HEK293T (cell line): ENCODE measurements at regions of chr14 and their contacts with region 1.

Region 1: DNA sequence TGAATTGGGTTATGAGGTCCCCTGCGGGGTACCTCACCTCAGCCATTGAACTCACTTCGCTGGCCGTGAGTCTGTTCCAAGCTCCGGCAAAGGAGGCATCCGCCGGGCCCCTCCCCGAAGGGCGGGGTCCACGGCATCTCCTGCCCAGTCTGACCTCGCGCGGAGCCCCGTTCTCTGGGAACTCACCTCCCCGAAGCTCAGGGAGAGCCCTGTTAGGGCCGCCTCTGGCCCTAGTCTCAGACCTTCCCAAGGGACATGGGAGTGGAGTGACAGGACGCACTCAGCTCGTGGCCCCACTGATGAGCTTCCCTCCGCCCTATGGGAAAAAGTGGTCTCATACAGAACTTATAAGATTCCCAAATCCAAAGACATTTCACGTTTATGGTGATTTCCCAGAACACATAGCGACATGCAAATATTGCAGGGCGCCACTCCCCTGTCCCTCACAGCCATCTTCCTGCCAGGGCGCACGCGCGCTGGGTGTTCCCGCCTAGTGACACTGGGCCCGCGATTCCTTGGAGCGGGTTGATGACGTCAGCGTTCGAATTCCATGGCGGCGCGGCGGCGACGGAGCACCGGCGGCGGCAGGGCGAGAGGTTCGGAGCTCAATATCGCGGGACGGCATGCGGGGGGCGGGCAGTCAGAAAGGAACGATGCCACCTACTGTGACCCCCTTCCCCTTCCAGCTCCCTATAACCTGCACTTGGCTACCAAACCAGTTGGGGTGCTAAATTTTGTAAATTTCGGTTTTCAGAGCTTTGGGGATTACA is at the start of gene PARP2:
- DNase-seq: peak; percentile 97

Region 2: DNA sequence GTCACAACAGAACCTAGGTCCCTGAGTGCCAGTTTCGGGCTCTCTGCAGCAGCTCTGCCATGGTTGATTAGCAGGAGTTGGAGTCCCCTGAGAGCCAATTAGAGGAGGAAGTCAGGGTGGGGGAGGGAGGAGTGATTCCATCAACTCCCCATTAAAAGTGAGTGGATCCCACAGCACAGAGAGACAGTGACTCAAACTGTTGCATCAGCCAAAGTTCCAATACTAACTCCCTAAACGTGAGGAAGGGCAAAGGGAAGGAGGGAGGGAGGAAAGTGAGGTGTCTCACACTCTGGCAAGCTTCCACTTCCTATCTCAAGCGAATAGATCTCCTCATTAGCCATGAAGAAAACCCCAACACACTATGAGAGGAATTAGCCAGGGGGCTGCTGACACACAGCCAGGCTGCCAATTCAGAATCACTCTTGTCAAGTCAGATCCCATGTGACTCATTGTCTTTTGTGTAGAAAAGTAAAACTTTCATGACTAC is 80.6 kb before region 1 on chr14:
- CTCF ChIA-PET with region 1: no interaction called
- POLR2A ChIA-PET with region 1: no interaction called
- DNase-seq: no peak

Region 3: GRCh38 chr14:20332788-20333493 is 10.3 kb before region 1 on chr14 and contains the start of gene CCNB1IP1:
- CTCF ChIA-PET with region 1: interaction called, 8 read pairs
- POLR2A ChIA-PET with region 1: interaction called, 162 read pairs
- DNase-seq: peak; percentile 79

Region 4: DNA sequence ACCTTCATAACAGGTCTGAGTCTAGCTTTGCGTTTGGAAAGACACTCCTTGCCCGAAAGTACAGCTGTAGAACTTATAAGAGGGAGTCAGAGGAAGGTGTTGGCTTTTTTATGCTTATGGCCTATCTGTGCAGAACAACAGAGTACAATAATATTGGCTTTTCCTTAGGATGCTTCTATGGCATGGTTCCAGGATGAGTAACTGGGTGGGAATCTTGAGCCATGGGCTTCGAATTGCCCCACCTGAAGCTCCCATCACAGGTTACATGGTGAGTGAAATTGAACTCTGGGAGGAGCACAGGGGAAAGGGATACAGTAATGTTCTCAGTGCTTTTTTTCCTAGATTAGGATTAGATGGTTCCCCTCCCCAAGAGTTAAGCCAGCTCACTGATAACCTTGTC is 13.1 kb after region 1 on chr14:
- CTCF ChIA-PET with region 1: no interaction called
- POLR2A ChIA-PET with region 1: interaction called, 21 read pairs
- DNase-seq: no peak

Region 5: DNA sequence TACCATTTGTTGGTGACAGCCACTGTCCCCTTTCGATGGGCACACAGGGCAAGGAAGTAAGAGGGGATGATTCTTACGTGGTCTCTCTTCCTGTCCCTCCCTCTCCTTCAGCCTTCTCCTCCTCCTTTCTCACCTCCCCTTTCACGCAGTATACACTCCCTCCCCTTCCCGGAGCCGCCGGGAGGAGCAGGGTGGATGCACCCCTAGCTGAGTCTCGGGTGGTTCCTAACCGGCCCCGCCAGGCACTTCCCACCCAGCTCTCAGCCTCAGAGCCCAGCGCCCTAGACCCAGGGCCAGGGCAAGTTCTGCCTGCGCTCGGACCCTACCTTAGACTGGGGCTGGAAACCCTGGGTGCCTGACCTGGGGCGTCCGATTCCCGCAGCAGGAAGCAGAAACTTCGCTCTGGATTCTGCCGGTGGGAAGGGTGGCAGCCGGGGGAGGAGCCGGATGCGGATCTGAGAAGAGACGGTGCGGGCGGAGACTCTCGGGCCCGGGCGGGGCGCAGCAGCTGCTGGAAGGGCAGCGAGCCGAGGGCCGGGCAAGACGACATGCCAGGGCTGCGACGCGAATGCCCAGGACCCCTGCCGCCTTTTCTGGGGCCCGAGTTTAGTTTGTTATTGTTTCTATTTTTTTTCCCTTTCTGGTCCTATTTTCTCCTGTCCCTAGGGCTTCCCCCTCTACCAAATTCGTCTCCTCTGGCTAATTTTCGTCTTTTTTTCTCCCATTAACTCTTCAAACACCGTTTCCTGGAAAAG is 69.9 kb after region 1 on chr14 and contains the start of gene TEP1:
- CTCF ChIA-PET with region 1: interaction called, 3 read pairs
- POLR2A ChIA-PET with region 1: interaction called, 25 read pairs
- DNase-seq: peak; percentile 79

Region 6: DNA sequence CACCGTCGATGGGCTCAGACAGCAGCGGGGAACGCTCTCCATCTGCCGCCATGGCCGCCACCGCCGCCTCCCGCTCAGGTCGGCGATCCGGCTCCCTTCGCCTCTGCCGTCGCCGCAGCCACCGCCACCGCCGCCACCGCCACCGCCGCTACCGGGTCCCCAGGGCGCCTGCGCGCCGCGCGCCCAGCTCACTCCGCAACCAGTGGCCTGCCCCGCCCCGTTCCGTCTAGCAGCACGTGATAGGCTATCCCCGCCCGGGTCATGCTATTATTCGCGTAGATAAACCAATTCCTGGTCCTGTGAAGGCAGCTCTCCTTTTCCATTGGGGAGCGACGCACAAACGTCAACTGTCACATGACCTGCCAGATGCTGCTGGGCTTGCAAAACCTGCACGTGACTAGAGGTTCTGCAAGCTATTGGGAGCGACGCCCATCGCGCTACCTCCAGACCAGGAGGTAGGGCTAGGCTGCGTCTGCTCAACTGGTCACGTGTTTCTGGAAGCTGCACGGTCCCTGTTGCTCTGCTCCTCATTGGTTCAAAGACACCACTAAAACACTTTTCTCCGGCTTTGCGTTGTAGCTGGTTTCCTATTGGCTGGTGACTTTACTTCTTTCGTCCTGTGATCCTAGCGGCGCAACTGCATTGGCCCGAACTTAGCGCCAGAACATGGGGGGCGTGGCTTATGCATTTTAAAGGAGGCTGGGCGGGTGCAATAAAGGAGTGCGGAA is 118.2 kb after region 1 on chr14 and contains the start of gene PIP4P1:
- CTCF ChIA-PET with region 1: no interaction called
- POLR2A ChIA-PET with region 1: interaction called, 37 read pairs
- DNase-seq: peak; percentile 90

Region 7: GRCh38 chr14:20469242-20469889 is 126.1 kb after region 1 on chr14 and contains the start of gene PNP:
- CTCF ChIA-PET with region 1: no interaction called
- POLR2A ChIA-PET with region 1: interaction called, 12 read pairs
- DNase-seq: peak; percentile 93